ENCODE measurements at regions of chr5 and their contacts with region 1.

Region 1: GRCh38 chr5:98796197-98796972 is 22.9 kb downstream of the RGMB start:
- DNase-seq: peak; percentile 69
- ATAC-seq: peak; percentile 94
- H3K4me3 Mint-ChIP-seq: no peak overlapping the region
- H3K27ac Mint-ChIP-seq: no peak overlapping the region
- H3K4me1 Mint-ChIP-seq: no peaks in the 10 kb centered on the region
- H3K27me3 Mint-ChIP-seq: no peaks in the 10 kb centered on the region
- CTCF ChIP-seq: peak; percentile 77

Region 2: DNA sequence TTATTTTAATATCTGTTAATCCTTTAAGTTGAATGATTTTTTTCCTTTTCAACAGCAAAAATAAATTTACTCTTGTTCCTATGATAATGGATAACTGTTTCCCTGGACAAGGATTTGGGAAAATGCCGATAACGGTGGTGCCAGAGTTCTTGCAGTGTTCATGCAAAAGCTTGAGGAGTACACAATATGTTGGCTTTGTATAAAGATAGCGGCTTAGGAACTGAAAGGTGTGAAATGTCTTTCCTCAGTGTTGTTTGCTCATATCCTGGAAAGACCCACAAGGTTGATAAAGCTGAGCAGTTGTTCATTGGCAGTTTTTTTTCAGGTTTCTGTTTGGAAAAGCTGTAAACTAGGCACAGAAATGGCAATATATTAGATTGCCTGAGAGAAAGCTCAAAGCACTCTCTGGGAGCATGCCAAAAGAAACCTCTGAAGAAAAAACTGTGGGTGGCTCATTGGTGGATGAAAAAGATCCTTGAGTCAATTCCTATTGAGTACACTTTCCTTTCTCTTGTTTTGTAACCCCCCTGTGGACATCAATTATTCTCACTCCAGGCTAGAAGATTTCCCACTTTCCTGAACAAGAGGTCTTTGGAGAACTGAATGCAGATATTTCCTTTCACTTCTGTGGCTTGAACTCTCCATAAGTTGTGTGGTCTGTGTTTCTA is 140.1 kb before region 1 on chr5:
- CTCF ChIA-PET with region 1: no interaction called
- POLR2A ChIA-PET with region 1: no interaction called
- intact Hi-C with region 1: no loop called
- DNase-seq: no peak
- ATAC-seq: no peak
- H3K4me3 Mint-ChIP-seq: no peak overlapping the region
- H3K27ac Mint-ChIP-seq: no peak overlapping the region
- H3K4me1 Mint-ChIP-seq: no peaks in the 10 kb centered on the region
- H3K27me3 Mint-ChIP-seq: no peaks in the 10 kb centered on the region
- CTCF ChIP-seq: no peak

Region 3: GRCh38 chr5:98773464-98774191 is 22.8 kb before region 1 on chr5 and contains the start of gene RGMB:
- CTCF ChIA-PET with region 1: interaction called, 228 read pairs
- POLR2A ChIA-PET with region 1: no interaction called
- intact Hi-C with region 1: no loop called
- DNase-seq: peak; percentile 93
- ATAC-seq: peak; percentile 92
- H3K4me3 Mint-ChIP-seq: peak within 1 kb of the TSS; percentile 87
- H3K27ac Mint-ChIP-seq: peak within 1 kb of the TSS; percentile 61
- H3K4me1 Mint-ChIP-seq: peaks cover 30% of the 10 kb centered on the region
- H3K27me3 Mint-ChIP-seq: peaks cover 42% of the 10 kb centered on the region
- CTCF ChIP-seq: no peak
- total RNA-seq, gene RGMB: 1.6 to 1.9 TPM

Region 4: DNA sequence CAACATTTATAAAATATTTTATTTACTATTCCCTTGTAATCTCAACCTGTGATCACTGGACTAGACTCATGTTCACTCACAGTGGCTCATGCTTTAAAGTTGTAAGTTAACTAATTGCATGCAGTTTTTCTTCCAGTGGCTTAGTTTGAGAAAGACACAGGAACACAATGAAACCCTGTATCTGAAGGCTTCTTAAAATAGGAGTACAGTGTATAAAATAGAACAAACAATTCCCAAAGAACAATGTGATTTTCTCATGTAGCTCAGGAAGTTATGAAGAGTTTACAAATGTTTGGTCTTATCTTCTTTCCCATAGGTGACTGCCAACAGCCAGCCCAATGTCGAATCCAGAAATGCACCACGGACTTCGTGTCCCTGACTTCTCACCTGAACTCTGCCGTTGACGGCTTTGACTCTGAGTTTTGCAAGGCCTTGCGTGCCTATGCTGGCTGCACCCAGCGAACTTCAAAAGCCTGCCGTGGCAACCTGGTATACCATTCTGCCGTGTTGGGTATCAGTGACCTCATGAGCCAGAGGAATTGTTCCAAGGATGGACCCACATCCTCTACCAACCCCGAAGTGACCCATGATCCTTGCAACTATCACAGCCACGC is 17.0 kb before region 1 on chr5:
- CTCF ChIA-PET with region 1: interaction called, 228 read pairs
- POLR2A ChIA-PET with region 1: no interaction called
- intact Hi-C with region 1: no loop called
- DNase-seq: no peak
- ATAC-seq: no peak
- H3K4me3 Mint-ChIP-seq: no peak overlapping the region
- H3K27ac Mint-ChIP-seq: no peak overlapping the region
- H3K4me1 Mint-ChIP-seq: peaks cover 15% of the 10 kb centered on the region
- H3K27me3 Mint-ChIP-seq: peaks cover 22% of the 10 kb centered on the region
- CTCF ChIP-seq: no peak

Region 5: DNA sequence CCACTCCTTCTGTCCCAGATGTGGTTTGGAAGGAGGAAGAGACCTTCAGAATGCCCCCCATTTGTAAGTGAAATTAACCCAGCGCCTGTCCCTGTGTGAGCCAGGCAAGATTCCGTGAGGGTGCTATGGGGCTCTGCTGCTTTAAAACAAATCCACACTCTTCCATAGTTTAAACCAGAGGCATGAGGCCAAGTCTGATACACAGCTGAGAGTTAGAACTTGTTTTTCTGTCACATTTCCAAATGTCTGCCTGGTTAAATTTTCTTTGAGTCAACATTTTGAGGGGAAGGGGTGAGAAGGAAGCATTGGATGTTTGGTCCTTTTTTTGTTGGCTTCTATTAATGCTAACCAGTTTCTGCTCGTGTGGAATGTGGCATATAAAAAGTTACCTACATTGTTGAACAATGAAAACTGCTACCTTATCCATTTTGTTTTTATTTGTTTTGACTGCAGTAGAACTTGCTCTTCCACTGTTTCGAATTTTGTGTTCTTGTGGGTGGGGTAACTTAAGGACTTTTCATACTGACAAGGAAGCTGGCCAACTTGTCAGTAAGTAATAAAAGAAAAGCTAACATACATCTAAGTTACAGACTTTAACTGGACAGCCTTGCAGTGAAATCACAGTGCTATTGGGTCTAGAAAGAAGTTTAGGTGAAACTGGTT is 10.1 kb before region 1 on chr5:
- CTCF ChIA-PET with region 1: interaction called, 25 read pairs
- POLR2A ChIA-PET with region 1: no interaction called
- intact Hi-C with region 1: no loop called
- DNase-seq: no peak
- ATAC-seq: no peak
- H3K4me3 Mint-ChIP-seq: no peak overlapping the region
- H3K27ac Mint-ChIP-seq: no peak overlapping the region
- H3K4me1 Mint-ChIP-seq: peaks cover 4% of the 10 kb centered on the region
- H3K27me3 Mint-ChIP-seq: no peaks in the 10 kb centered on the region
- CTCF ChIP-seq: no peak